MCF 10A (cell line): ENCODE measurements at regions of chr12 and their contacts with region 1.

Region 1: GRCh38 chr12:122946690-122947341 is 19.4 kb downstream of the ABCB9 start:
- DNase-seq: peak; percentile 100
- H3K4me3 Mint-ChIP-seq: peak overlapping the region; percentile 46
- H3K27ac Mint-ChIP-seq: peak overlapping the region; percentile 93
- H3K4me1 Mint-ChIP-seq: peaks cover 47% of the 10 kb centered on the region
- H3K27me3 Mint-ChIP-seq: no peaks in the 10 kb centered on the region
- CTCF ChIP-seq: peak; percentile 22

Region 2: DNA sequence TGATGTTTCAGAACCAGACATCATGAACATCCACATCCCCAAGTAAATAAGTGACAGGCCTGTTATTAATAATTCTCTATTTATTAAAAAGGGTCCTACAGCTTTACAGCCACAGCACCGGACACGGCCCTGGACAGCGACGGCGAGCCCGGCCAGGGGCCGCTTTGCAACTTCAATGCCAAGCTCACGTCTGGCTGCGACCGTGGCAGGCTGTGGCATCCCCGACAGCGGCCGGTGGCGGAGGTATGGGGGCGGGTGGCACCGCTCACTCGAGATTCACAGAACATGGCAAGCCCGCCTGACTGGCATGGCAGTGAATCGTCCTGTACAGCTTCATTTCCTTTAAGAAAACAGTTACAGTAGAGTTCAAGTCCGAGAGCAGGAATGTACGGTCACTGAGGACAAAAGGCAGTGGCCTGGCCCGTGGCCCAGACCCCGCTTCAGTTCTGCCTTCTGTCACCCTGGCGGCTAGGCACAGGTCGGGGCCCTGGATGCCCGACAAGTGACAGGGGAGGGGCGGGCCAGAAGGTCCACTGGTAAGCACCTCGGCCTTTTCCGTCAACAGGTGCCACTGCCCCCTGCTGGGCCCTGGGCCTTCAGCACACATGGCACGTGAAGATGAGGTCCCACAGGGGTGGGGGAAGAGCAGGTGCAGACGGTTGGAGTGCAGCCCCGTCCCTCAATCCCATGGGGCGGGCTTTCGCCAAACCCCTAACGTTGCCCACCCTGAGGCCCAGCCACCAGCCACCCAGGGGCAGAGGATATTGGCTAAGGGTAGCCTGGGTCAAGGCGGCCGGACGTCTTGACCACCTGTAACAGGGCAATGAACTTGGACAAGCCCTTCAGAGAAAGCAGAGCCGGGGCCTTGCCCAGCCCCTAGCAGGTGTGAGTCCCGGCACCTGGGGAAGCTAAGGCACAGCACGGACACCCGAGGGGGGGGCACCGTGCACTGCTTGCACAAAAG is 81.3 kb before region 1 on chr12:
- CTCF ChIA-PET with region 1: interaction called, 230 read pairs
- POLR2A ChIA-PET with region 1: interaction called, 14 read pairs
- intact Hi-C with region 1: loop called (anchors 1 kb)
- DNase-seq: no peak
- H3K4me3 Mint-ChIP-seq: no peak overlapping the region
- H3K27ac Mint-ChIP-seq: no peak overlapping the region
- H3K4me1 Mint-ChIP-seq: peaks cover 18% of the 10 kb centered on the region
- H3K27me3 Mint-ChIP-seq: no peaks in the 10 kb centered on the region
- CTCF ChIP-seq: peak; percentile 38

Region 3: DNA sequence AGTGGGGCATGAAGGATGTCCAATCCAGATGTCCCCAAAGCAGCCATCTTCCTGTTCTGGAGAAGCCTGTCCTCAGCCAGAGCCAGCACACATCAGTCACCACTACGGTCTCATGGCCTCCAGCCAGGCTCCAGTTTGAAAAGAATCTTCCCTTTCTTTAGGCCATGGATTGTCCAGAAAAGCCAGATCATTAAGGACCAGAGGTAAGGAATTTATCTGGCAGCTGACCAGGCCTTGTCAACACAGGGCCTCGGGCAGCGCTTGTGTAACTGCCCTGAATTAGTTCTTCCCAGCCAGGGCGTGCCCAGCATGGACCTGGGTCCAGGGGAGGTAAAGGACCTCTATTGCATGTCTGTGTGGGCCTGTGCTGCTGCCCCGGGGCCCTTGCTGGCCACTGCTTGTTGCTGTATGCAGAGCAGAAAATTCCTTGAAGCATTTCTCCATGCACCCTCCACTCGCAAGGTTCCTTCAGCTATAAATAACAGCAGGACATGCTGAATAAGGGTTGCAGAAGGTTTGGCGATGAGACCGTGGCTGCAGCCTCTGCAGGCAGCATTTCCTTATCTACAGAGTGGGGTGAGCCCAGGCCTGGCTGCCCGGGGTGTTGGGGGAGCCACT is 29.2 kb before region 1 on chr12:
- CTCF ChIA-PET with region 1: no interaction called
- POLR2A ChIA-PET with region 1: interaction called, 53 read pairs
- intact Hi-C with region 1: loop called (anchors 2 kb)
- DNase-seq: peak; percentile 96
- H3K4me3 Mint-ChIP-seq: no peak overlapping the region
- H3K27ac Mint-ChIP-seq: no peak overlapping the region
- H3K4me1 Mint-ChIP-seq: peaks cover 26% of the 10 kb centered on the region
- H3K27me3 Mint-ChIP-seq: no peaks in the 10 kb centered on the region
- CTCF ChIP-seq: no peak

Region 4: GRCh38 chr12:122974274-122974891 is 27.6 kb after region 1 on chr12:
- CTCF ChIA-PET with region 1: interaction called, 3 read pairs
- POLR2A ChIA-PET with region 1: interaction called, 15 read pairs
- intact Hi-C with region 1: no loop called
- DNase-seq: peak; percentile 99
- H3K4me3 Mint-ChIP-seq: peak overlapping the region; percentile 94
- H3K27ac Mint-ChIP-seq: peak overlapping the region; percentile 95
- H3K4me1 Mint-ChIP-seq: peaks cover 5% of the 10 kb centered on the region
- H3K27me3 Mint-ChIP-seq: no peaks in the 10 kb centered on the region
- CTCF ChIP-seq: no peak